ENCODE measurements at regions of chr2 and their contacts with region 1.

Region 1: GRCh38 chr2:128027801-128028667 is at the start of gene SAP130:
- DNase-seq: peak; percentile 98
- ATAC-seq: peak; percentile 78
- H3K4me3 Mint-ChIP-seq: peak within 1 kb of the TSS; percentile 92
- H3K27ac Mint-ChIP-seq: peak within 1 kb of the TSS; percentile 84
- H3K4me1 Mint-ChIP-seq: peaks cover 18% of the 10 kb centered on the region
- H3K27me3 Mint-ChIP-seq: peaks cover 4% of the 10 kb centered on the region
- CTCF ChIP-seq: no peak
- total RNA-seq, gene SAP130: 24.7 and 27.1 TPM in 2 replicates

Region 2: DNA sequence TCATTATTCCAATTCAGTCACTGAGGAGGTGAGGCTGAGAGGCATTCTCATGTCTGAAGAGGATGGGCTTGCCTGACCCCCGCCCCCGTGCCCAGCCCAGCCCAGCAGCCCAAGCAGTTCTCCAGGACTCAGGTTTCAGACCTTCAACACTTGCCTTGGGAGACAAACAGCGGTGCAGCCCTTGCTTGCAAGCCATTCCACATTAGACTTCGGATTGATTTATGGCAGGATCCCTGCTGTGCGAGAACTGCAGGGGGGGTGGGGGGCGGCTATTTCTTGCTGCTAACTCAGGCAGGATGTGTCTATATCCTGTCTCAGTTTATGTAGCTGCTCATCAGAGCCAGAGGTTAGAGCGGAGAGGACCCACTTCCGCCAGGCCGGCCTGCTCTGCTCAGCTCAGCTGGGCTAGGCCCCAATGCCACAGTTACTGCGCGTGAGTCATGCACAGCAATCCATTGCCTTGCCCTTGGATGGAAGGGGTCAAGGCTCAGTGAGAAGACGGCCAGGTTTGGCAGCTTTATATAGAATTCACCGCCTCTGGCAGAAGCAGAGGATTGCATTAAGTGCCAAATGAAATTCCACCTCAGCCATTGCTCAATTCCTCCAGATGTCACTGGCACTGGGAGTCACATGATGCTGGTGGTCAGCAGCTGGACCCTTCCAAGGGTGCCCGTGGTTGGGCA is 1370.3 kb before region 1 on chr2:
- CTCF ChIA-PET with region 1: no interaction called
- POLR2A ChIA-PET with region 1: no interaction called
- intact Hi-C with region 1: loop called (anchors 5 kb)
- DNase-seq: peak; percentile 40
- ATAC-seq: peak; percentile 69
- H3K4me3 Mint-ChIP-seq: peak overlapping the region; percentile 94
- H3K27ac Mint-ChIP-seq: peak overlapping the region; percentile 94
- H3K4me1 Mint-ChIP-seq: peaks cover 68% of the 10 kb centered on the region
- H3K27me3 Mint-ChIP-seq: no peaks in the 10 kb centered on the region
- CTCF ChIP-seq: no peak

Region 3: GRCh38 chr2:127106951-127107621 is 920.9 kb before region 1 on chr2 and contains the start of gene BIN1:
- CTCF ChIA-PET with region 1: no interaction called
- POLR2A ChIA-PET with region 1: no interaction called
- intact Hi-C with region 1: loop called (anchors 5 kb)
- DNase-seq: peak; percentile 75
- ATAC-seq: peak; percentile 89
- H3K4me3 Mint-ChIP-seq: peak within 1 kb of the TSS; percentile 86
- H3K27ac Mint-ChIP-seq: no peak within 1 kb of the TSS
- H3K4me1 Mint-ChIP-seq: peaks cover 13% of the 10 kb centered on the region
- H3K27me3 Mint-ChIP-seq: peaks cover 8% of the 10 kb centered on the region
- CTCF ChIP-seq: no peak
- total RNA-seq, gene BIN1: 62.5 and 63.5 TPM in 2 replicates

Region 4: DNA sequence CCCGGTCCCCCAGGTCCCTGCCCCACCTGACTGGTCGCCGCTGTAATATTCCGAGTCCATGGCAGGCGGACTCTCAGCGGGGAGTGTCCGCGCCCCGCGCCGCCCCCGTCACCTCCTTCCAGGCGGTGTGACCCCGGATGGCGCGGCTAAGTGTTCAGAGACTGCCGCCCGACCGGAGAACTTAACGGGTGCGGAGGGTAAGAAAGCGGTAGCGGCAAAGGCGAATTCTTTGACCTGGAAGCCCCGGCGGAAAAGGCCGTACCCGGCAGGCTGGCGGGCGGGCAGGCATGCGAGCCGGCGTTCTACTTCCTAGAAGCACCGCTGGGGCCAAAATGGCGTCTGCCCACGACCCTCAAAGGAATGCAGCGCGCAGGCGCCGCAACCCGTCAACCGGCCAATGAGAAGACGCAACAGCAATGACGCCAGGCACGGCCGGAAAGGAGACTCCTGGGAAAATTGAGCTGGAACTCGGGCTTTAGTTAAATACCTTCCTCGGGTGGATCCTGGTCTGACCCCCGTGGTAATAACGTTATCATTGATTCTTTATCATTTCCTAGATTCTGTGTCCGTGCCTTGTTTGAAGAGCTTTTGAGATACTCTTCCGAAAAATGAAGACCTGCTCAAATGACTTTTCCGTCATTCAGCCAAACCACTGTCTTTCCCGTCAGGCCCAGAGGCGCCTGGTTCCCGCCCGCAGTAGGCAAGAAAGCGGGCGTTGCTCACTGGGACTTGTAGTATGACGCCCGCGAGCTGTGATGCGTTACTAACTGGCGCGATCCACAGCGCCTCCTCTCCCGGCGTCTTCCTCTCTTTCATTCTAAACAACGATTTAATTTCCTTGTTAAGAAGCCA is 501.7 kb before region 1 on chr2 and contains the start of gene IWS1:
- CTCF ChIA-PET with region 1: no interaction called
- POLR2A ChIA-PET with region 1: no interaction called
- intact Hi-C with region 1: loop called (anchors 1 kb)
- DNase-seq: peak; percentile 85
- ATAC-seq: peak; percentile 86
- H3K4me3 Mint-ChIP-seq: peak within 1 kb of the TSS; percentile 95
- H3K27ac Mint-ChIP-seq: peak within 1 kb of the TSS; percentile 98
- H3K4me1 Mint-ChIP-seq: peaks cover 32% of the 10 kb centered on the region
- H3K27me3 Mint-ChIP-seq: no peaks in the 10 kb centered on the region
- CTCF ChIP-seq: no peak
- total RNA-seq, gene IWS1: 45.6 and 49.3 TPM in 2 replicates

Region 5: DNA sequence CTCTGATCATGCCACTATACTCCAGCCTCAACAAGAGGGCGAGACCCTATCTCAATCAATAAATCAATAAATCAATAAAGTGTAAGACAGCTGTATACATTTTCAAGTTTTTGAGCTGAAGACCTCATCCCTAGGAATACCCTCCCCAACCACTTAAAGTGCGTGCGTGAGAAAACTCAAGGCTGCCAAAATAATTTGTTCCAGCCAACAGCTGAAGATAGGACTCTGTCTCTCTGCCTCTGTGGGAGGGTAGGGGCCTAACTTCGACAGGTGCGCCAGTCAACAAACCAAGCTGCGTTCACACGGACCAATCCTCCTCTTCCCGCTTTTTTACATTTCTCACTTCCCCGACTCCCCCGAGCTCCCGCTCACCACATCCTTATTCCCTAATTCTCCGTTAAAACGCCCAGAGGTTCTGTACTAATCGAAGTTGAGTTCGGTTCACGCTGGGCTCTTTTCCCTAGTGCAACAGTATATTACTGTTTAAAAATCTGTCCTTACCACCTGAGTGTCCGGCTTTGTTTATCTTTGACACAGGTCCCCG is 170.7 kb before region 1 on chr2:
- CTCF ChIA-PET with region 1: no interaction called
- POLR2A ChIA-PET with region 1: no interaction called
- intact Hi-C with region 1: loop called (anchors 1 kb)
- DNase-seq: no peak
- ATAC-seq: no peak
- H3K4me3 Mint-ChIP-seq: peak overlapping the region; percentile 88
- H3K27ac Mint-ChIP-seq: peak overlapping the region; percentile 64
- H3K4me1 Mint-ChIP-seq: peaks cover 42% of the 10 kb centered on the region
- H3K27me3 Mint-ChIP-seq: no peaks in the 10 kb centered on the region
- CTCF ChIP-seq: no peak

Region 6: DNA sequence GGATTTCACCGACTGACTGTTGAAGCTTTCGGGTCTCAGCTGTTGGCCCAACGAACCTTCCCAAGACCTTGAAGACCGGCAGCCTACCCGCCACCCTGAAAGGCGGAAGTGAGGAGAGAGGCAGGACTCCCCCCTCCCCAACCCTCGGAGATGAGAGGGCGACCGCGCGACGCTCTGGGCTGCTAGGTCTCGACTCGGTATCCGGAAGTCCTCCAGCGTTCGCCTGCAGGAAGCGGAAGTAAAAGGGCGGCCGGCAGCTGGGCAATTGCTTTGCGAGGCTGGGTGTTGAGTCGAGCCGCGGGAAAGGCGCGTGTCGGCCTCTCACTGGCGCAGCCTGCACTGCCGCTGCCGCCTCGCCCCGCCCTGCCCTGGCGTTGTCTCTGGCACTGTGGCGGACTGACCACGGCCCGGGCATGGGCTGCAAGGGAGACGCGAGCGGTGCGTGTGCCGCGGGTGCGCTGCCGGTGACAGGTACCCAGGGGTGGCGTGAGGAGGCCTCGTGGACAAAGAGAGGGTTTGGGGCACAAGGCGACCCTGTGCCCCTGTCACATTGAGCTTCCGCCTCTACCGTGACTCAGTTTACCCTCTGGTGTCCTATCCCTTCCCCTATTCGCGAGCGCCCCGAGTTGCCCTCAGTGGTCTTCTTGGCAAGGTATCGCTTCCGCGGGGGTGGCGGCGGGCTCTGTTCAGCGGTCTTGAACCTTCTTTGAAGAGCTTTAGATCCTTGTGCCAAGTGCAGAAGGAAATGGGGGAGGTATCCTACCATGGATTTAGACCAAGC is 63.1 kb after region 1 on chr2 and contains the start of gene UGGT1:
- CTCF ChIA-PET with region 1: no interaction called
- POLR2A ChIA-PET with region 1: interaction called, 31 read pairs
- intact Hi-C with region 1: loop called (anchors 1 kb)
- DNase-seq: peak; percentile 83
- ATAC-seq: peak; percentile 96
- H3K4me3 Mint-ChIP-seq: peak within 1 kb of the TSS; percentile 88
- H3K27ac Mint-ChIP-seq: peak within 1 kb of the TSS; percentile 93
- H3K4me1 Mint-ChIP-seq: peaks cover 41% of the 10 kb centered on the region
- H3K27me3 Mint-ChIP-seq: no peaks in the 10 kb centered on the region
- CTCF ChIP-seq: no peak
- total RNA-seq, gene UGGT1: 43.7 and 46.8 TPM in 2 replicates